Activated CD4-positive, alpha-beta T cell treated with anti-CD3 and anti-CD28 coated beads for 36 hours (primary cell): ENCODE measurements at regions of chr13 and their contacts with region 1.

Region 1: DNA sequence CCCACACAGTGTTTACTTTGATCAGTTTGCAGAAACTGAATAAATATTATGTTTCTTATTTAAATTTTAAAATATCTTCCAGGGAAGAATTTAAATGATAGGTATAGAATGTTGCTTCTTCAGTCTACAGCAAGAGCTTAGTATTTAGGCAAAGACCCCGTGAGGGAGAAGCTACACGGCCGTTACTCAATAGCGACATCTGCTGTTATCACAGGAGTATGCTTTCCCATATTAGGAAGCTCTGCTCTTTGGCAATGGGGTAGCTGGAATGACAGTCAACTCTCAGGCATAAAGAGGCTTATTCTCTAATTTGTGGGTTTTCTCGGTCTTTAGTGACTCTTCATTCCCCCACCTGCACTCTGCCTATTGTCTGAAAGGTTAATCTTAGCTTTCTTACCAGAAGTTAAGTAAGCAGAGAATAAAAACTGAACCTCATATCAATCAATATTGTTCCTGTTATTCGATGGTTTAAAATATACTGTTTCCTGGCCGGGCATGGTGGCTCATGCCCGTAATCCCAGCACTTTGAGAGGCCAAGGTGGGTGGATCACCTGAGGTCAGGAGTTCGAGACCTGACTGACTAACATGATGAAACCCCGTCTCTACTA is 13.2 kb upstream of the LHFPL6 start:
- DNase-seq: peak; percentile 51
- ATAC-seq: peak; percentile 55
- H3K4me3 Mint-ChIP-seq: no peak overlapping the region
- H3K27ac Mint-ChIP-seq: no peak overlapping the region
- H3K4me1 Mint-ChIP-seq: no peaks in the 10 kb centered on the region
- H3K27me3 Mint-ChIP-seq: peaks cover 7% of the 10 kb centered on the region

Region 2: GRCh38 chr13:38872693-38873092 is 743.5 kb before region 1 on chr13:
- CTCF ChIA-PET with region 1: no interaction called
- POLR2A ChIA-PET with region 1: no interaction called
- intact Hi-C with region 1: loop called in 1 of 2 experiments (anchors 10 kb)
- DNase-seq: peak; percentile 68
- ATAC-seq: peak; percentile 33
- H3K4me3 Mint-ChIP-seq: no peak overlapping the region
- H3K27ac Mint-ChIP-seq: no peak overlapping the region
- H3K4me1 Mint-ChIP-seq: no peaks in the 10 kb centered on the region
- H3K27me3 Mint-ChIP-seq: peaks cover 17% of the 10 kb centered on the region

Region 3: DNA sequence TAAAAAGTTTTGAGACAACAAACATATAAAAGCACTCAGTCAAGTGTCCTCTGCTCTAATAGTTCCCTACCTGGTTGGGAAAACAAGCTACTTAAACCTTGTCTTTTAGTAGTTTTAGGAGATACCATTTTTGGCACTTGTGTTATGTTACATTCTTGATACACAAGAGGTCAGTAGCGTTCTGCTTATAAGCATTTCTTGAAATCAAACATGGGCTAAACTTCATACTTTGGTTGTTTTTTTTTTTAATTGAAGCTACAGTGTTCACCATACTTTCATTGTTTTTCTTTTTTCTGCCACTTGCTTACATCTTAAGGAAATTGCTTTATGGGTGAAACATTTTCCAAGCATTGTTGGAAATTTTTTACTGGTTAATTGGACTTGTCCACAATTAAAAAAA is 565.0 kb before region 1 on chr13:
- CTCF ChIA-PET with region 1: interaction called, 19 read pairs
- POLR2A ChIA-PET with region 1: no interaction called
- intact Hi-C with region 1: loop called (anchors 1 kb)
- DNase-seq: no peak
- ATAC-seq: peak; percentile 47
- H3K4me3 Mint-ChIP-seq: no peak overlapping the region
- H3K27ac Mint-ChIP-seq: no peak overlapping the region
- H3K4me1 Mint-ChIP-seq: peaks cover 3% of the 10 kb centered on the region
- H3K27me3 Mint-ChIP-seq: no peaks in the 10 kb centered on the region

Region 4: DNA sequence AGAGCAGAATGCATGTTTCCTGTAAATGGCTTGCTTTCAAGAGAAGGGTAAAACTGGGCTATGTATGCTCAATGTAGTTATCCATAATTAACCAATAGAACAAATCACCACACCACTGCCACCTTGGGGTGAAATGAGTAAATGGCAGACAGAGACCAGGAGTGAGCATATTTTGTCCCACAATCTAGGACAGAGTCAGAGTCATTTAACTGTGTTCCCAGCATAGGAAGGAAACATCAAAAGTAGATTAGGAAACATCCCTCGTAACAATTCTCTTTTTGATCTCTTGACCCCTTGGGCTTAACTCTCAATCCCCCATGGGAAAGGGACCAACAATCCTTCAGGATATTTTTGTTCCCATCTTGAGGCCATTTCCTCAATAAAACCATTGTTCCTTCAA is 353.2 kb before region 1 on chr13:
- CTCF ChIA-PET with region 1: interaction called, 3 read pairs
- POLR2A ChIA-PET with region 1: no interaction called
- intact Hi-C with region 1: loop called in 1 of 2 experiments (anchors 2 kb)
- DNase-seq: peak; percentile 65
- ATAC-seq: peak; percentile 85
- H3K4me3 Mint-ChIP-seq: no peak overlapping the region
- H3K27ac Mint-ChIP-seq: no peak overlapping the region
- H3K4me1 Mint-ChIP-seq: peaks cover 7% of the 10 kb centered on the region
- H3K27me3 Mint-ChIP-seq: peaks cover 9% of the 10 kb centered on the region

Region 5: GRCh38 chr13:39602614-39603366 is 13.4 kb before region 1 on chr13 and contains the start of gene LHFPL6:
- CTCF ChIA-PET with region 1: interaction called, 26 read pairs
- POLR2A ChIA-PET with region 1: no interaction called
- intact Hi-C with region 1: no loop called
- DNase-seq: peak; percentile 85
- ATAC-seq: peak; percentile 99
- H3K4me3 Mint-ChIP-seq: peak within 1 kb of the TSS; percentile 72
- H3K27ac Mint-ChIP-seq: no peak within 1 kb of the TSS
- H3K4me1 Mint-ChIP-seq: peaks cover 6% of the 10 kb centered on the region
- H3K27me3 Mint-ChIP-seq: peaks cover 37% of the 10 kb centered on the region
- total RNA-seq, gene LHFPL6: 1.2 TPM

Region 6: GRCh38 chr13:40352380-40352778 is 736.2 kb after region 1 on chr13:
- CTCF ChIA-PET with region 1: no interaction called
- POLR2A ChIA-PET with region 1: no interaction called
- intact Hi-C with region 1: no loop called
- DNase-seq: no peak
- ATAC-seq: no peak
- H3K4me3 Mint-ChIP-seq: no peak overlapping the region
- H3K27ac Mint-ChIP-seq: no peak overlapping the region
- H3K4me1 Mint-ChIP-seq: peaks cover 16% of the 10 kb centered on the region
- H3K27me3 Mint-ChIP-seq: no peaks in the 10 kb centered on the region